K562 (cell line): ENCODE measurements at regions of chr10 and their contacts with region 1.

Region 1: DNA sequence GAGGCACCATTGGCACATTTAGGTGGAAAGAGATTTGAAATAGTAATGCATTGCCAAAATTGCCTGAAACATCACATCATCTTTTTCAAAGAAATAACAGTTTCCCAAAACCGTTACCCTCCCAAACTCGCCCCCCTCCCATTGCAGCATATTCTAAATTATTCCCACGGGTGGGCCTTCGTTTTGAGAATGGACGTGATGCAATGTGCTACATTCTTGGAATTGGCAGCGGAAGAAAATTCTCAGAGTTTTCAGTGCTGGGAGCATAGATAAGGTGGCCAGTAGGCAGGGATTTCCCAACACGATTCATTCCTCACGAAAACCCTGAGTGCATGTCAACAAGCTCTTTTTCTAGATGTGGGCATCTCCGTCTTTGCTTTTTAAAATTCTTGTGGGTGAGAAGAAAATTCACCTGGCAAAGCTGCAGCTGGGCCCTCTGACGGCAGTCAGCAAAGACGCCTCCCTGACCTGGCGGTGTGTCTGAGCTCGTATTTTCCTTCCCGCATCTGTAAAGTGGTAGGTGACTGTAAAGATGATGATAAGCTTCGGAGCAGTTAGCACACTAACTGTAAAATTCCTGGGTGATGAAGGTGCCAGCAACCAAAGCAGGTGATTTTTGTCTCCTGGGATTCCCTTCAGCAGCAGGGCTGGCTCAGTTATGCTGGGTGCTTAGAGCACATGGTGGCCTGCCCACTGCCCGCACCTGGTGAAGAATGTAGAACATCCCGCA is 141.8 kb upstream of the KLF6 start:
- DNase-seq: peak; percentile 31 to 85 (median 52)
- ATAC-seq: peak; percentile 82
- H3K4me3 ChIP-seq: peak overlapping the region; percentile 1; the same call in 1 of the 2 replicates
- H3K27ac ChIP-seq: peak overlapping the region; percentile 32
- H3K4me1 ChIP-seq: peaks cover 11 to 30% of the 10 kb centered on the region in 2 experiments; a peak in 4 of 5 replicates
- H3K27me3 ChIP-seq: no peaks in the 10 kb centered on the region
- CTCF ChIP-seq: no peak
- EP300 ChIP-seq: peak; percentile 96
- POLR2A ChIP-seq: no peak
- RAD21 ChIP-seq: no peak

Region 2: DNA sequence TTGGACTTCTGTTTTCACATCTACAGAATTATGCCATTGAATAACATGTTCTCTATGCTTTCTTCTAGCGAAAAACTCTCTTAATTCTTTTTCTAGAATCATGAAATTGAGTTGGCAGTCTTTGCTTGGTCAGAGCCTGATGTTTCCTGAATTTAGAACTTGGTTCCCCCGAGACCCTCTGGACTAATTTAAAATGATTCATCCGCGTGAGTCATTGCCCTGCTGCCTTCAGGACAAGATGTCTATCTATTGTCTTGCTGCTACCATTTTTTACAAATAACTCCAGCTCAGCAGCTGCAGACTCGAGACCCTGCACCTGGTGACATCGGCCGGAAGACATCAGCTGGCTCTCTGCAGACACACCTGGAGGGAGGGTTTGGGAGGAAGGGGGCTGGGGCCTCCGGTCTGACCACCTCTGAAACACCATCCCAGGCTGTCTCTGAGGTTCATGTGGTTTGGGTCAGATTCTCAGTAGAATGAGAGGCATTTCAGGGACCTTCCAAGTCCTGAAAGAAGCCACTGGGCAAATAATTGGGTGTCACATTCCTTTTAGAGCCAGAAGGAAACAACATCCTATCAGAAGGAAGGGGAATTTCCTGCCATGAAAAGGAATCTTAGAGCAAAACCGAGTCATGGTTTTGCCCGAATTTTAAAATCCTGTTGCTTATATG is 120.9 kb before region 1 on chr10:
- CTCF ChIA-PET with region 1: no interaction called
- POLR2A ChIA-PET with region 1: interaction called, 5 read pairs
- in situ Hi-C with region 1: no loop called
- intact Hi-C with region 1: loop called (anchors 2 kb)
- DNase-seq: peak; percentile 63 to 79 (median 68)
- ATAC-seq: peak; percentile 2
- H3K4me3 ChIP-seq: no peak overlapping the region
- H3K27ac ChIP-seq: peak overlapping the region; percentile 95
- H3K4me1 ChIP-seq: peaks cover 50 to 80% of the 10 kb centered on the region in 2 experiments
- H3K27me3 ChIP-seq: no peaks in the 10 kb centered on the region; a peak in 1 of 5 replicates
- CTCF ChIP-seq: no peak
- EP300 ChIP-seq: peak; percentile 71
- POLR2A ChIP-seq: peak; percentile 18; the same call in 1 of the 2 replicates
- RAD21 ChIP-seq: peak in 1 of 2 experiments; percentile 14; a peak in 1 of 4 replicates

Region 3: DNA sequence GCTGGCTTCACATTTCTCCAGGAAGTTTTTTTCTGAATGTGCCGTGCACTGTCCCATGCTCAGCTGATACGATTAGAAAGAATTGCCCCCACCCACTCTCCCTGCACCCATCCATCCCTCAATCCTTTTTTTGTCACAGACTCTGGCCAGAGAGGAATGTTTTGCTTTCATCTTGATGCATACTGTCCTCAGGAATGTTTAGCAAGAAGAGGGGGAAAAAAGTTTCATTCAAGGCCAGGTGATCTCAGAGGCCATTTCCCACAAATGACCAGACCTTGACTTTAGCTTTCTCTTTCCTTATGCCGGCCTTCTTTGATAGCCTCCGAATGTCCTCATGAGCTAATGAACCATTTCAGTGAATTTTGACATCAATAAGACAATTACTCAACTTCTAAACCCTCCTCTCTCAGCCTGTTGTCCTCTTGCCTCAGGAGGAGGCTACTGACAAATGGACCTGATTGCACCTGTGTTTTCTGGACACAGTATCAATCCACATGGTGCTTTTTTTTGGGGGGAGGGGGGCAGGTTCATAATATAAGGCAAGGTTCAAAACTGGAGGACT is 36.8 kb before region 1 on chr10:
- CTCF ChIA-PET with region 1: no interaction called
- POLR2A ChIA-PET with region 1: interaction called, 4 read pairs
- in situ Hi-C with region 1: no loop called
- intact Hi-C with region 1: loop called (anchors 1 kb)
- DNase-seq: no peak
- ATAC-seq: no peak
- H3K4me3 ChIP-seq: no peak overlapping the region
- H3K27ac ChIP-seq: peak overlapping the region; percentile 56; the same call in 1 of the 3 replicates
- H3K4me1 ChIP-seq: peaks cover 10 to 47% of the 10 kb centered on the region in 2 experiments; a peak in 4 of 5 replicates
- H3K27me3 ChIP-seq: no peaks in the 10 kb centered on the region
- CTCF ChIP-seq: no peak
- EP300 ChIP-seq: no peak
- POLR2A ChIP-seq: no peak
- RAD21 ChIP-seq: no peak